CD4-positive, alpha-beta memory T cell (primary cell): ENCODE measurements at regions of chr6 and their contacts with region 1.

Region 1: GRCh38 chr6:116279260-116280063 is at the start of gene TSPYL1:
- DNase-seq: peak; percentile 96 to 98 (median 97)
- H3K4me3 ChIP-seq: peak within 1 kb of the TSS; percentile 95 to 97
- H3K4me3 Mint-ChIP-seq: peak within 1 kb of the TSS; percentile 96 to 100 (median 99)
- H3K27ac ChIP-seq: peak within 1 kb of the TSS; percentile 97
- H3K27ac Mint-ChIP-seq: peak within 1 kb of the TSS; percentile 99 to 100 (median 100)
- H3K4me1 ChIP-seq: peaks cover 51% of the 10 kb centered on the region
- H3K4me1 Mint-ChIP-seq: peaks cover 40 to 75% (median 51%) of the 10 kb centered on the region in 4 donors
- H3K27me3 ChIP-seq: no peaks in the 10 kb centered on the region
- H3K27me3 Mint-ChIP-seq: no peaks in the 10 kb centered on the region
- total RNA-seq, gene TSPYL1: 107 to 109 TPM

Region 2: GRCh38 chr6:116217069-116217468 is 62.4 kb before region 1 on chr6:
- CTCF ChIA-PET with region 1: interaction called, 4 read pairs
- POLR2A ChIA-PET with region 1: interaction called, 10 read pairs
- intact Hi-C with region 1: loop called (anchors 5 kb)
- DNase-seq: peak in 4 of 5 donors; percentile 35 to 51 (median 38)
- H3K4me3 ChIP-seq: no peak overlapping the region
- H3K4me3 Mint-ChIP-seq: no peak overlapping the region
- H3K27ac ChIP-seq: no peak overlapping the region
- H3K27ac Mint-ChIP-seq: peak overlapping the region in 3 of 7 donors; percentile 18 to 80 (median 68)
- H3K4me1 ChIP-seq: no peaks in the 10 kb centered on the region
- H3K4me1 Mint-ChIP-seq: peaks cover 0 to 4% (median 2%) of the 10 kb centered on the region in 4 donors
- H3K27me3 ChIP-seq: no peaks in the 10 kb centered on the region
- H3K27me3 Mint-ChIP-seq: no peaks in the 10 kb centered on the region

Region 3: GRCh38 chr6:116268589-116269293 is 10.7 kb before region 1 on chr6:
- CTCF ChIA-PET with region 1: interaction called, 40 read pairs
- POLR2A ChIA-PET with region 1: interaction called, 66 read pairs
- intact Hi-C with region 1: loop called (anchors 1 kb)
- DNase-seq: peak in 4 of 5 donors; percentile 44 to 50 (median 46)
- H3K4me3 ChIP-seq: no peak overlapping the region
- H3K4me3 Mint-ChIP-seq: no peak overlapping the region
- H3K27ac ChIP-seq: no peak overlapping the region
- H3K27ac Mint-ChIP-seq: peak overlapping the region; percentile 4 to 82 (median 65)
- H3K4me1 ChIP-seq: peaks cover 25% of the 10 kb centered on the region
- H3K4me1 Mint-ChIP-seq: peaks cover 16 to 29% (median 24%) of the 10 kb centered on the region in 4 donors
- H3K27me3 ChIP-seq: no peaks in the 10 kb centered on the region
- H3K27me3 Mint-ChIP-seq: no peaks in the 10 kb centered on the region

Region 4: GRCh38 chr6:116300566-116300965 is 21.1 kb after region 1 on chr6:
- CTCF ChIA-PET with region 1: no interaction called
- POLR2A ChIA-PET with region 1: no interaction called
- intact Hi-C with region 1: no loop called
- DNase-seq: no peak
- H3K4me3 ChIP-seq: no peak overlapping the region
- H3K4me3 Mint-ChIP-seq: no peak overlapping the region
- H3K27ac ChIP-seq: no peak overlapping the region
- H3K27ac Mint-ChIP-seq: no peak overlapping the region
- H3K4me1 ChIP-seq: no peaks in the 10 kb centered on the region
- H3K4me1 Mint-ChIP-seq: no peaks in the 10 kb centered on the region
- H3K27me3 ChIP-seq: no peaks in the 10 kb centered on the region
- H3K27me3 Mint-ChIP-seq: no peaks in the 10 kb centered on the region

Region 5: DNA sequence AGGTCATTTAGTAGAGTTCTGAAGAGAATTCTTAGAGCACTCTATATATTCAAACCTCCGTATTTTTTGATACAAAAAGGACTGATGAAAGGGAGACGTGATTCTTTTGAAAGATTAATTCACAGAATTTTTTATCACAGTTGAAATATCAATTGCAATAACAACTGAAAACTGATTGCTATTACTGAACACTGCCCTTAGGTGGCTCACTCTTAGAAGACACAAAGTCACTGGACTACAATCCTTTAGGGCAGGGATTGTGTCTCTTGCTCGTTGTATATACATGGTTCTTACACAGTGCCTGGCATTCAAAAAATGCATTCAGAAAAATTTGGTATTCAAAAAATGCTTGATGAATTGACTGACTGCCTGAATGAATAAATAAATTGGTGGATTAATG is 164.6 kb after region 1 on chr6:
- CTCF ChIA-PET with region 1: no interaction called
- POLR2A ChIA-PET with region 1: no interaction called
- intact Hi-C with region 1: loop called (anchors 10 kb)
- DNase-seq: peak in 3 of 5 donors; percentile 13 to 31 (median 14)
- H3K4me3 ChIP-seq: no peak overlapping the region
- H3K4me3 Mint-ChIP-seq: peak overlapping the region in 1 of 8 donors; percentile 1
- H3K27ac ChIP-seq: no peak overlapping the region
- H3K27ac Mint-ChIP-seq: peak overlapping the region in 1 of 7 donors; percentile 87
- H3K4me1 ChIP-seq: peaks cover 13% of the 10 kb centered on the region
- H3K4me1 Mint-ChIP-seq: peaks cover 7 to 15% (median 13%) of the 10 kb centered on the region in 4 donors
- H3K27me3 ChIP-seq: no peaks in the 10 kb centered on the region
- H3K27me3 Mint-ChIP-seq: peaks cover 0 to 6% of the 10 kb centered on the region in 2 donors

Region 6: GRCh38 chr6:116680975-116681808 is 401.7 kb after region 1 on chr6 and contains the start of gene KPNA5:
- CTCF ChIA-PET with region 1: interaction called, 4 read pairs
- POLR2A ChIA-PET with region 1: interaction called, 20 read pairs
- intact Hi-C with region 1: loop called (anchors 1 kb)
- DNase-seq: peak; percentile 83 to 93 (median 88)
- H3K4me3 ChIP-seq: peak within 1 kb of the TSS; percentile 75 to 95
- H3K4me3 Mint-ChIP-seq: peak within 1 kb of the TSS; percentile 96 to 99 (median 98)
- H3K27ac ChIP-seq: peak within 1 kb of the TSS; percentile 84
- H3K27ac Mint-ChIP-seq: peak within 1 kb of the TSS; percentile 95 to 99 (median 99)
- H3K4me1 ChIP-seq: peaks cover 34% of the 10 kb centered on the region
- H3K4me1 Mint-ChIP-seq: peaks cover 33 to 61% (median 46%) of the 10 kb centered on the region in 4 donors
- H3K27me3 ChIP-seq: no peaks in the 10 kb centered on the region
- H3K27me3 Mint-ChIP-seq: no peaks in the 10 kb centered on the region
- total RNA-seq, gene KPNA5: 60.7 to 61.8 TPM